Ovary (tissue), 10 donors: ENCODE measurements at regions of chr6 and their contacts with region 1.

Region 1: DNA sequence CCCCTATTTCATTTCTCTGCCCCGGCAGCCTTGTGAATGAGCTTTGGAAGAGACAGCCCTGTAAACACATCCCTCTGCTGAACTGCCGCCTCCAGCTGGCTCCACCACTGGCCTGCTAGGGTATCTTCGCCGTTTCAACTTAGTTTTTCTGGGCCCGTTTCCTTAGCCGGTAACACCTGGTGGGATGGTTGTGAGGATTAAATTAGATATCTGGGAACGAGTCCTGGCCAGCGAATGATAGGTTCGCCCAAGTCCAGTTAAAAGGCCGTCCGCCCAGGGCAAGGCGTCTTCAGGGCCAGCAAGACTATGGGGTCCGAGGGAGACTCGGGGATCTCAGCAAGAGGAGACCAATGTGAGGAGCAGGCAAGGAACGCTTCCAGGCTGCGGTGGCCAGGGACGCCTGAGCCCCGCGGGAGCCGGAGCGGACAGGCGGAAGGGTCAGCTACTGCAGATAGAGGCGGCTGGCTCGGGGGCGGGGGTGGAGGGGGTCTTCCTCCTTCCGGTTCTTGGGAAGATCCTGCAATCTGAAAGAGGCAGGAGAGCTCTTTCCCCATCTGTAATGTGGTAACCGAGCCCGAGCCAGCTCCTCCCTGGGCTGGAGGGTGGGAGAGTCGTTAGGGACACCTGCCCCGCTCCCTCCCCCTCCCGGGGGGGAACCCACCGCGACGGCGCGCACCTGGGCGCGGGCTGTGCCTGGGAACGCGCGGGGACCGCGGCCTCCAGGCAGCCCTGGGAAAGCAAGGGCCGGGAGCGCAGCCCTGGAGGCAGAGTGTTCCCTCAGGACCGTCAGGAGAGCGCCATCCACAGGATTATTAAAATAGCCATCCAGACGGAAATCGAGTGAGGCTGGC is 4.5 kb upstream of the PTCRA start:
- DNase-seq: no peak
- H3K4me3 ChIP-seq: peak overlapping the region; percentile 19
- H3K27ac ChIP-seq: no peak overlapping the region
- H3K4me1 ChIP-seq: peaks cover 11% of the 10 kb centered on the region
- H3K27me3 ChIP-seq: no peaks in the 10 kb centered on the region
- CTCF ChIP-seq: no peak
- EP300 ChIP-seq: no peak
- POLR2A ChIP-seq: no peak

Region 2: DNA sequence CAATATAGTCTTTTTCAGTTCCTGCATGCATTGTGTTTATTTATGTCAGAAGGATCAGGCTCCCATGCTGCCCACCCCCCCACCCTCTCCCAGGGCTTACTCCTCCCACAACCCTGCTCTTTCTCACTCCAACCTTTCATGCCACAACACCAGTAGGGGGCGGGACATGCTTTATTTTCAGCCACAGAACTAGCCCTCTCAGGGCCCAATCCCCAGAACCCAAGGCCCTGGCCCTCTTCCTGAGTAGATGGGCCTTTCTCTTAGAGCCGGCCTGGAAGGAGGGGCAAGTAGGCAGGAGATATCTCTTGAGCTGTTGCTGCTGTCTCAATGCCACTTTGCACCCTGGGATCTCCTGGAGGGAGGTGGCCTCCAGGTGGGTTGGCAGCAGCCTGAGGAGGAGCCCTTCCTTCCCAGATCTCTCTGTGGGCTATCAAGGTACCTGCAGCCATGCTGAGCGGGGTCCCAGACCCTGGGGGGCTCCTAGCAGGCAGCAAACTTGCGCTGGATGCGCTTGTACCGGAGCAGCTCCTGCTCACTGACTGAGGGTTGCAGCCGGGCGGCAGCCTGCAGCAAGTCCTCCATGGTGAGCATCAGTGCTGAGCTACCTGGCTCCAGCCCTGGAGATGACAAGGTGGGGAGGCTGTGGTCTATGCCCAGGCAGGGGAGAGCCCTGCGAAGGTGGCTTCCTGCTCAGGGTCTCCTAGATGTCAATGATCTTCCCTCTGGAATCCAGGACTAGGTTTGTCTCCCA is 52.6 kb after region 1 on chr6:
- intact Hi-C with region 1: loop called in 1 of 4 experiments (anchors 10 kb)
- DNase-seq: no peak
- H3K4me3 ChIP-seq: no peak overlapping the region
- H3K27ac ChIP-seq: no peak overlapping the region
- H3K4me1 ChIP-seq: peaks cover 5% of the 10 kb centered on the region
- H3K27me3 ChIP-seq: no peaks in the 10 kb centered on the region
- CTCF ChIP-seq: no peak
- EP300 ChIP-seq: no peak
- POLR2A ChIP-seq: no peak

Region 3: DNA sequence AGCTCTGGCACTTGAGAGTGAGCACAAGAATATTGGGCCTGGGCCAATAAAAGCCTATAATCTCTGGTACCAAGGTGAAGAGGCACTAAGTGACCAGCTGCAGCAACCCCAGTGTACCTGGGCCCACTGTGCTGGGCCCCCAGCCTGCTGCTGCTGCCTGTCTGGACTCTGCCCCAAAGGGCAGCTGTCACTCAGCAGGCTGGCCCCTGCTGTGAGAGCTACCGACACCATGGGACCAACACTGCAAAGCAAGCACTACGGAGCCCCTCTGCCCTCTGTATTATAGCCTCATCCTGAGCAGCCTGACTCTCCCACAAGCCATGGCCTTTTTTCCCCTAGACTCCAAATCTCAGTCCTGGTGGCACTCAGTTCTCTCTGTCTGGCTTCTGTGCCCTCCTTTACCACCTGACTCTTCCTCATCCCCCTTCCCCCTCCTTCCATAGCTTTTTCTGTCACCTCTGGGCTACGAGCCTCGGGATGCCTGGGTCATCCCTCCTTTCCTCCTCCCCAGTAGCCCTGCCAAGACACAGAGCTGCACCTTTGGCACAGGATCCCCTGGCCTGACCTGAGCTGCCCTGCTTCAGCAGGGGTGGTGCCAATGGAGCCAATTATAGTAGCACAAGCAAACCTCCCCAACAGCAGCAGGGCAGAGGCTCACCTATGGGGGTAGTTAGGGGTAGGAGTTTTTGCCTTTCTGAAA is 124.2 kb after region 1 on chr6:
- intact Hi-C with region 1: no loop called
- DNase-seq: no peak
- H3K4me3 ChIP-seq: no peak overlapping the region
- H3K27ac ChIP-seq: no peak overlapping the region
- H3K4me1 ChIP-seq: no peaks in the 10 kb centered on the region
- H3K27me3 ChIP-seq: no peaks in the 10 kb centered on the region
- CTCF ChIP-seq: no peak
- EP300 ChIP-seq: no peak
- POLR2A ChIP-seq: no peak

Region 4: DNA sequence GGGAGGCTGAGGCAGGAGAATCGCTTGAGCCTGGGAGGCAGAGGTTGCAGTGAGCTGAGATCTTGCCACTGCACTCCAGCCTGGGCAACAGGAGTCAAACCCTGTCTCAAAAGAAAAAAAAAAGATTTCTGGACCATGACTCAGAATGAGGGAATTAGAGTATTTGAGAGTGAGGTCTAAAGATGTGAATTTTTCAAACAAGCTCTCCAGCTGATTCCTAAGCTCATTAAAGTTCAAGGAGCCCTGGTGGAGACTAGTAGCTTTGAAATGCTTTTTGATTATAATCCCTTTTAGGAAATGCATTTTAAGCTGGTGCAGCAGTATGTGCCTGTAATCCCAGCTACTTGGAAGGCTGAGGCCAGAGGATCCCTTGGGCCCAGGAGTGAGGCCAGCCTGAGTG is 237.9 kb after region 1 on chr6:
- intact Hi-C with region 1: loop called in 2 of 4 experiments (anchors 5 to 10 kb)
- DNase-seq: no peak
- H3K4me3 ChIP-seq: no peak overlapping the region
- H3K27ac ChIP-seq: no peak overlapping the region
- H3K4me1 ChIP-seq: no peaks in the 10 kb centered on the region
- H3K27me3 ChIP-seq: no peaks in the 10 kb centered on the region
- CTCF ChIP-seq: no peak
- EP300 ChIP-seq: no peak
- POLR2A ChIP-seq: no peak